SK-N-SH (cell line): ENCODE measurements at regions of chr19 and their contacts with region 1.

Region 1: GRCh38 chr19:3984908-3985642 is at the start of gene EEF2:
- DNase-seq: peak; percentile 98
- H3K4me3 ChIP-seq: peak within 1 kb of the TSS; percentile 91 to 99
- H3K27ac ChIP-seq: peak within 1 kb of the TSS; percentile 90 to 91
- H3K4me1 ChIP-seq: peaks cover 15 to 37% of the 10 kb centered on the region in 2 experiments
- H3K27me3 ChIP-seq: no peaks in the 10 kb centered on the region
- CTCF ChIP-seq: no peak
- EP300 ChIP-seq: peak in 1 of 2 experiments; percentile 32; a peak in 1 of 4 replicates
- RAD21 ChIP-seq: no peak
- polyA plus RNA-seq, gene EEF2: 1,295 and 1,553 TPM in 2 replicates

Region 2: DNA sequence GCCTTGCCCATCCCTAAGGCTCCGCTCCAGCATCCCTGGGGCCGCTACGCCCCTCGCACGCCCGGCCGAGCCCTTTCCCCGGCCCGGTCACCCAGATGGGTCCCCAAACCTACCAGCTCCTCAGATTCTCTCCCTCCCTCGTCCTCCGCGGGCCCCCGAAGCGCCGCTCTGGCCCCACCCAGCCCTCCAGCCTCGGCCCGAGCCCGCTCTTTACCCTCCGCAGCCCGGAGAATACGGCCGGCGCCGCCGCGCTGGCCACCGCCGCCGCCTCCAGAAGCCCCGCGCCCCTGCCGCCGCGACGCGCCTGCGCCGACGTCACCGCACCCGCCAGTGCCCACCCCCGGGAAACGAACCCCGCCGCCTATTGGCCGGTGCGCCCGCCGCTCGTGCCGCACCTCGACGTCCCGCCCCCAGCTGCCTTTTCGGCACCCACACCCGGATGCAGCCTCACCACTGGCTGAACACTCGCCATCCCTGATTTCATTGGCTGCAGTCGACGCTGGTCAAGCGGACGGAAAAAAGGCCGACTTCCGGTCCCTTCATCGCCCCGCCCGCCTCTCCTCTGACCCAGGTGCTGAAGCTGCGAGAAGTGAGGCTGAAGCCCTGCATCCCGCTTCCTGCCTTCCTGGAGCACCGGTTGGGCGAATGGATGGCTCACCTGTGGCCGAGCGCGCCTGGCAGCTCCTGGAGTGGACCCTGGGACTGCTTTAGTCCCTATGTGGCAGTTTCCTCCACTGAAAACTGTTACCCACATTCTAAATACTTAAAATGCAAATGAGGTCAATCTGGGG is 14.1 kb before region 1 on chr19 and contains the start of gene DAPK3:
- CTCF ChIA-PET with region 1: interaction called, 8 read pairs
- POLR2A ChIA-PET with region 1: interaction called, 60 read pairs
- DNase-seq: peak; percentile 98
- H3K4me3 ChIP-seq: peak within 1 kb of the TSS; percentile 75 to 80
- H3K27ac ChIP-seq: peak within 1 kb of the TSS; percentile 77 to 99
- H3K4me1 ChIP-seq: peaks cover 16 to 22% of the 10 kb centered on the region in 2 experiments; a peak in 3 of 4 replicates
- H3K27me3 ChIP-seq: no peaks in the 10 kb centered on the region
- CTCF ChIP-seq: no peak
- EP300 ChIP-seq: 0 out of 4 replicates have a peak, but pooled peaks of 1 of the 2 experiments have one; percentile 22
- RAD21 ChIP-seq: no peak
- polyA plus RNA-seq, gene DAPK3: 118 and 142 TPM in 2 replicates

Region 3: GRCh38 chr19:4007021-4007835 is 22.2 kb after region 1 on chr19 and contains the start of gene PIAS4:
- CTCF ChIA-PET with region 1: interaction called, 38 read pairs
- POLR2A ChIA-PET with region 1: interaction called, 11 read pairs
- DNase-seq: peak; percentile 100
- H3K4me3 ChIP-seq: peak within 1 kb of the TSS; percentile 79 to 86
- H3K27ac ChIP-seq: peak within 1 kb of the TSS; percentile 56 to 91
- H3K4me1 ChIP-seq: peaks cover 12 to 17% of the 10 kb centered on the region in 2 experiments; a peak in 3 of 4 replicates
- H3K27me3 ChIP-seq: no peaks in the 10 kb centered on the region
- CTCF ChIP-seq: no peak
- EP300 ChIP-seq: 0 out of 4 replicates have a peak, but pooled peaks of 1 of the 2 experiments have one; percentile 9
- RAD21 ChIP-seq: no peak
- polyA plus RNA-seq, gene PIAS4: 7.7 and 14.1 TPM in 2 replicates

Region 4: GRCh38 chr19:4054471-4055208 is 69.6 kb after region 1 on chr19:
- CTCF ChIA-PET with region 1: no interaction called
- POLR2A ChIA-PET with region 1: no interaction called
- DNase-seq: no peak
- H3K4me3 ChIP-seq: no peak overlapping the region
- H3K27ac ChIP-seq: no peak overlapping the region
- H3K4me1 ChIP-seq: peaks cover 0 to 6% of the 10 kb centered on the region in 2 experiments; a peak in 2 of 4 replicates
- H3K27me3 ChIP-seq: no peaks in the 10 kb centered on the region
- CTCF ChIP-seq: no peak
- EP300 ChIP-seq: no peak
- RAD21 ChIP-seq: no peak